Activated T-helper 1 cell treated with anti-CD3 and anti-CD28 coated beads, Interleukin-12 subunit alpha, Interleukin-12 subunit beta, Interleukin-2, Interleukin-4 antibody, amounts not matched to agents 30 ng/mL and 10 ng/mL and 1 ng/mL, durations not matched to agents 14 hours and 24 hours and 36 hours (primary cell): ENCODE measurements at regions of chr1 and their contacts with region 1.

Region 1: DNA sequence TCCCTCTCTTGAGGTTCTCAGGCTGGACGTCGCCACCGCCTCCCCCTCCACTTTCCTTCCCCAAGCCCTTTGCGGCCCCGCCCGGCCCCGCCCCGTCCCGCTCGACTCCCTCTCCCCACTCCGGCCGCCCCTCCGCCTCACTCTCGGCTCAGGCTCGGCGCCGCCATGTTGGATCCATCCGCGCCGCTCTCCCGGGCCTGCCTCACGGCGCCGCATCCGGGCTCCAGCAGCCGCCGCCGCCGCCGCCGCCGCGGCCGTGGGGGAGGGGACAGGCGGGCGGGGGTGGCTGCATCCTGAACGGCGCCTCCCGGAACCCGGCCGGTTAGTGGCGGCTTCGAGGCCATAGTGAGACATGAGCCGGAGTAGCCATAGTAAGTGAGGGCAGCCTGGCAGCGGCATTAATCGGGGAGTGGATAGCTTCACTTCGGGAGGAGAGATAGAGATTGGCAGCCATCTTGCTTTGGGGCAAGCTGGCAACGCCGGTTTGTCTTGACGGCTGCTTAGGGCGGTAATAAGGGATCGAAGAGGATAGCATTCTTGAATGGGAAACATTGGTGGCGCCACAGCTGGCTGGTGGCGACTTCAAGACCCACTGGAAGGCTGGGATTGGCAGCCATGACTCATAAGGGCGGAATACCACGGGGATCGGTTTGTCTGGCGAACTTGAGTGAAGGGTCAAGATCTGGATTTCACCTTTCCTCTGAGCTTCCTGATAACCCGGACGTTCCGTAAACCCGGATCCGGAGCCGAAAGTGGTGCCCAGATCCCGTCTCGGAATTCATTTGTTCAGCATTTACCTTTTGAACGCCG is at the start of gene DEDD:
- DNase-seq: peak; percentile 87
- H3K4me3 Mint-ChIP-seq: no peak within 1 kb of the TSS
- H3K27ac Mint-ChIP-seq: peak within 1 kb of the TSS; percentile 90
- H3K4me1 Mint-ChIP-seq: peaks cover 46% of the 10 kb centered on the region
- H3K27me3 Mint-ChIP-seq: no peaks in the 10 kb centered on the region
- total RNA-seq, gene DEDD: 44.5 and 48.0 TPM in 2 replicates

Region 2: DNA sequence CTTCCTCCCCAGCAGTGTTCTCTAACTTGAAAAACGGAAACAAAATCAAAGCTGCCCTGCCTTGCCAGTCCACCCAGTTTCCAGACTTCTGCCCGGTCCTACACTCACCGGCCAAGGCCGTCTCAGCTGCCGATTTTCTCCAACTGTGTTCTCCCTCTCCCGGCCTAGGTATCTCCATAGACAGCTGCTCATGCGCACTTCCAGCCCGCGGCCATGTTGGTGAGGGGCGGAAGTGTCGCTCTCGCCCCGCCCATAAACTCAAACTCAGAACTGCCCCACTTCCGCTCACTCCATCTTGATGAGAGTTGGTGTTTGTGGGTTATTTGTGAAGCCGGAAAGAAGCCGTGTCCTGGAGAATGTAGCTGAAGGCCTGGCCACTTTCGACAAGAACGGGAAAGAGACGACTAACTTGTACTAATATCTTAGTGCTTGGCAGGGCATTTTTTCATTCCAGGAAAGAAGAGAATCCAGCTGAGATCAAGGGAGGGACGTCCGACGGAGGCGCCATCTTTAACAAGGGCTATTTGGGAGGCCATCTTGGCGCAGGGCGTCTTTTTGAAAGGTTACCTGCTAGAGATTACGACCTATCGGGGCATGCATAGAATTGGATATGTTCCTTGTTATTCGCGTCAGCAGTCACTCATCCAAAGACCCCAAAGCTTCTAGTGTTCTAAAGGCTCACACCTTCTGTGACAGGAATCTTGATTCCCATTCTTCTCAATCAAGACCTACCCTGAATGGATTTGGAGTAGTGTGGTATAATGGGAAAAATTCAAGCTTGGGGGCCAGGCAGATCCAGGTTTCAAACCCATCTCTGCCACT is 86.7 kb before region 1 on chr1 and contains the start of gene USF1:
- intact Hi-C with region 1: loop called (anchors 1 kb)
- DNase-seq: peak; percentile 92
- H3K4me3 Mint-ChIP-seq: peak within 1 kb of the TSS; percentile 94
- H3K27ac Mint-ChIP-seq: peak within 1 kb of the TSS; percentile 97
- H3K4me1 Mint-ChIP-seq: peaks cover 55% of the 10 kb centered on the region
- H3K27me3 Mint-ChIP-seq: no peaks in the 10 kb centered on the region
- total RNA-seq, gene USF1: 50.6 and 51.5 TPM in 2 replicates

Region 3: DNA sequence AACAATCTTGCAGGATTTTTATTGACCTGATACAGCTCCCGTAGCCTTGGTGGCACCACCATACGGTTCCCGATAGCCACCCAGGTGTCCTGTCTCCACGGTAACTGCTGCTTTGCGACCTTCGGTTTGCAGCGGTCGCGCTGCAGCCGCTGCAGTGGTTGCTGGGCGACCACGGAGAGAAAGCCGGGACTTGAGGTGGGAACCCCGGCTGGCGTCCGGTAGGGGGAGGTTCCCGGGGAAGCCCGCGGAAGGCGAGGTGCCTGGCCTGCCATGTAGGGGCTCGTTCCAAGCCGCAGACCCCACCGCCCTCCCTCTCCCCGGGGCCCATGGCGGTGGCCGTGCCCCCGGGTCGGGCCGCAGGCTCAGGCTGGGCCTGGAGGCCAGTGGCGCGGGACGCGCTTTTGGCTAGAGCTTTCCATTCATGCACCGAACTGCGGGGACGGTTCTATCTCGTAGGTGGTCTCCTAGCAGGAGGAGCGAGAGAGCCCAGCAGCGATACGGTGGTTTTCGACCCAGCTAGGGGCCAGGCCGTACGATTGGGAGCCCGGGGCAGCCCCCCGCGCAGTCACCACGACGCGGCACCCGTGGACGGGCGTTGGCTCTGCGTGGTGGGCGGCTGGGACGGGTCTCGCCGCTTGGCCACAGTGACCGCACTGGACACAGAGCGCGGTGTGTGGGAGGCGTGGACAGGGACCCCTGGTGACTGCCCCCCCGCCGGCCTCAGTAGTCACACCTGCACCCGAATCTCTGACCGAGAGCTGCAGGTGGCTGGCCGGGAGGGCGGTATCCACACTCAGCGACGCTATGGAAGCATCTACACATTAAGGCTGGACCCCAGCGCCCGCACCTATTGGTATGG is 34.2 kb before region 1 on chr1 and contains the start of gene KLHDC9:
- intact Hi-C with region 1: loop called (anchors 2 kb)
- DNase-seq: peak; percentile 68
- H3K4me3 Mint-ChIP-seq: peak within 1 kb of the TSS; percentile 80
- H3K27ac Mint-ChIP-seq: peak within 1 kb of the TSS; percentile 96
- H3K4me1 Mint-ChIP-seq: peaks cover 39% of the 10 kb centered on the region
- H3K27me3 Mint-ChIP-seq: peaks cover 2% of the 10 kb centered on the region
- total RNA-seq, gene KLHDC9: not detected in 2 replicates

Region 4: GRCh38 chr1:161153679-161154426 is 21.2 kb after region 1 on chr1 and contains the start of gene UFC1:
- intact Hi-C with region 1: loop called (anchors 1 kb)
- DNase-seq: peak; percentile 80
- H3K4me3 Mint-ChIP-seq: peak within 1 kb of the TSS; percentile 99
- H3K27ac Mint-ChIP-seq: peak within 1 kb of the TSS; percentile 100
- H3K4me1 Mint-ChIP-seq: peaks cover 33% of the 10 kb centered on the region
- H3K27me3 Mint-ChIP-seq: no peaks in the 10 kb centered on the region
- total RNA-seq, gene UFC1: 86.3 and 94.5 TPM in 2 replicates

Region 5: DNA sequence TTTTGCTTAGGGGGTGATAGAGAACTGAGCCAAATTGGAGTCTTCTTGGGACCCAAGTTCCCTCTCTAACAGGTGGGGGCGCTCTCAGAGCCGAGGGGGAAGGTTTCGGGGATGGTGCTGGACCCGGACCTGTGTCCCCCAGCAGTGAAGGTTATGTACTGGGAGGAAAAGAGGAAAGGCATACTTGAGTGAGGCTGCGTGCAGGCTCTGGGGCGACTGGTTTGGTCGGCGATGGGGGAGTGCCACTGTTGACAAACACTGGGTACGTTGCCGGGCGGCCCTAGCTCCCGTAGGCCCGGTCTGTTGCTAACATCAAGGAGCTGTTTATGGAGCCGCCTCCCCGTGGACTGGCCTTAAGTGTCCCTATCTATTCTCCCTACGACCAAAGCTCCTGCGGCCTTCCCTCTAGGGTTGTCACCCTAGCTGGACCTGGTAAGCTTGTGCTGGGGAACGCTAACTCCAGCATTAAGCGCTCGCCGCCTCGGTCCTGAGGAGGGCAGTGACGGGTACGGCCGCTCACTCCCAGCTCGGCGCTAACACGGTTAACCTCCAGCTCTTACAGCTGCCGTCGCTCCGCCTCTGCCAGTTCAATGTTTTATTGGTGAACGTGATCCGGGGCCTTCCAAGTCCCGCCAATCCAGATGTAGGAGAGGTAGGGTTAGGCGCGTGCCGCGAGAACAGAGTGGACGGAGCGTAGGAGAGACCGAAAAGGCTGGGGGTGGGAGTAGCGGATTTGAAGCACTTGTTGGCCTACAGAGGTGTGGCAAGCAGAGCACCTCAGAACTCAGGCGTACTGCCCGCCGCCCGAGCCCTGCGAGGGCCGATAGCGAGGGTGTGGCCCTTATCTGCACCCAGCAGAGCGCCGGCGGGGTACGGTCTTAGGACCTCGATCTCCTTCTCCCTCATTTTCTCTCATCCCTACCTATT is 33.4 kb after region 1 on chr1 and contains the start of gene PPOX:
- intact Hi-C with region 1: loop called (anchors 1 kb)
- DNase-seq: peak; percentile 95
- H3K4me3 Mint-ChIP-seq: peak within 1 kb of the TSS; percentile 87
- H3K27ac Mint-ChIP-seq: peak within 1 kb of the TSS; percentile 99
- H3K4me1 Mint-ChIP-seq: peaks cover 61% of the 10 kb centered on the region
- H3K27me3 Mint-ChIP-seq: no peaks in the 10 kb centered on the region
- total RNA-seq, gene PPOX: 25.1 and 26.0 TPM in 2 replicates